ENCODE measurements at regions of chr10 and their contacts with region 1.

Region 1: GRCh38 chr10:122051251-122051996 is 62.5 kb downstream of the TACC2 start:
- DNase-seq: peak; percentile 64 to 87
- ATAC-seq: peak; percentile 52 to 71; a peak in 5 of 6 replicates
- H3K4me3 ChIP-seq: no peak overlapping the region
- H3K27ac ChIP-seq: peak overlapping the region; percentile 67 to 82
- H3K4me1 ChIP-seq: peaks cover 25% of the 10 kb centered on the region
- CTCF ChIP-seq: peak; percentile 79
- EP300 ChIP-seq: no peak
- POLR2A ChIP-seq: no peak
- RAD21 ChIP-seq: peak; percentile 62 to 64

Region 2: GRCh38 chr10:121974535-121975294 is 76.7 kb before region 1 on chr10 and contains the start of gene NSMCE4A:
- CTCF ChIA-PET with region 1: interaction called, 19 read pairs
- POLR2A ChIA-PET with region 1: no interaction called
- DNase-seq: peak; percentile 85 to 90
- ATAC-seq: peak; percentile 91 to 94
- H3K4me3 ChIP-seq: peak within 1 kb of the TSS; percentile 81
- H3K27ac ChIP-seq: peak within 1 kb of the TSS; percentile 97 to 99
- H3K4me1 ChIP-seq: peaks cover 14% of the 10 kb centered on the region; the same call in 2 of the 3 replicates
- CTCF ChIP-seq: peak; percentile 75
- EP300 ChIP-seq: no peak
- POLR2A ChIP-seq: peak; percentile 52
- RAD21 ChIP-seq: peak; percentile 16 to 39; a peak in 2 of 5 replicates
- polyA plus RNA-seq, gene NSMCE4A: 135 and 172 TPM in 2 replicates

Region 3: DNA sequence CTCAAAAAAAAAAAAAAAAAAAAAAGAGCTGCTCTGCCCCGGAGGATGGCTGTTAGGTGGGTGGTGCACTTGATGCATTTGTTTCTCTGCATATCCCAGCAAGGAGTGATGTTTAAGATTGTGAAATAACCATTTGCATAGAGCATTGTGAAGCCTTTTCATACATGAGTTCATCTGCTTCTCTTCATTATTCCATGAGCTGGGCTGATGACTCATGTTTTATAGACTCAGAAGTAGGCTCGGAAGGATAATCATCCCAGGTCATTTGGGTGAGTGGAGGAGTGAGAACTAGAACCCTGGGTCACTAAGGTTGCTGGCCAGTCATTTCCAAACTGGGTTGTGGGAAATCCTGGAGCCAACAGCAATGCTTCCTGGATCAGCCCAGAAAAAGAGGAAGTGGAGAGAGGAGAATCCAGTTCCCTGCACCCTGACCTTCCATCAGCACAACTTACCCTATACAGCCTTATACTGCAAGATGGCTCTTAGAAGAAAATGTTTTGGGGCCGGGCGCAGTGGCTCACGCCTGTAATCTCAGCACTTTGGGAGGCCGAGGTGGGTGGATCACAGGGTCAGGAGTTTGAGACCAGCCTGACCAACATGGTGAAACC is 17.2 kb before region 1 on chr10:
- CTCF ChIA-PET with region 1: interaction called, 14 read pairs
- POLR2A ChIA-PET with region 1: no interaction called
- DNase-seq: peak; percentile 57 to 83
- ATAC-seq: peak; percentile 71 to 77
- H3K4me3 ChIP-seq: no peak overlapping the region
- H3K27ac ChIP-seq: peak overlapping the region; percentile 49 to 79
- H3K4me1 ChIP-seq: peaks cover 49% of the 10 kb centered on the region
- CTCF ChIP-seq: no peak
- EP300 ChIP-seq: no peak
- POLR2A ChIP-seq: no peak
- RAD21 ChIP-seq: no peak

Region 4: GRCh38 chr10:122040786-122041185 is 10.6 kb before region 1 on chr10:
- CTCF ChIA-PET with region 1: interaction called, 21 read pairs
- POLR2A ChIA-PET with region 1: no interaction called
- DNase-seq: no peak
- ATAC-seq: peak in 1 of 2 experiments; percentile 31; a peak in 3 of 6 replicates
- H3K4me3 ChIP-seq: no peak overlapping the region
- H3K27ac ChIP-seq: peak overlapping the region in 1 of 2 experiments; percentile 2; a peak in 1 of 6 replicates
- H3K4me1 ChIP-seq: peaks cover 23% of the 10 kb centered on the region
- CTCF ChIP-seq: no peak
- EP300 ChIP-seq: no peak
- POLR2A ChIP-seq: no peak
- RAD21 ChIP-seq: no peak

Region 5: GRCh38 chr10:122062831-122063674 is 11.6 kb after region 1 on chr10:
- CTCF ChIA-PET with region 1: interaction called, 13 read pairs
- POLR2A ChIA-PET with region 1: no interaction called
- DNase-seq: peak; percentile 95 to 99
- ATAC-seq: peak; percentile 98 to 100
- H3K4me3 ChIP-seq: no peak overlapping the region
- H3K27ac ChIP-seq: peak overlapping the region; percentile 97 to 98
- H3K4me1 ChIP-seq: peaks cover 56% of the 10 kb centered on the region
- CTCF ChIP-seq: no peak
- EP300 ChIP-seq: peak; percentile 92 to 95
- POLR2A ChIP-seq: no peak
- RAD21 ChIP-seq: peak; percentile 36 to 57; a peak in 4 of 5 replicates

Region 6: GRCh38 chr10:122098924-122099323 is 47.5 kb after region 1 on chr10:
- CTCF ChIA-PET with region 1: interaction called, 15 read pairs
- POLR2A ChIA-PET with region 1: no interaction called
- DNase-seq: no peak
- ATAC-seq: no peak
- H3K4me3 ChIP-seq: no peak overlapping the region
- H3K27ac ChIP-seq: peak overlapping the region; percentile 93 to 95
- H3K4me1 ChIP-seq: peaks cover 35% of the 10 kb centered on the region
- CTCF ChIP-seq: no peak
- EP300 ChIP-seq: no peak
- POLR2A ChIP-seq: no peak
- RAD21 ChIP-seq: no peak